ENCODE measurements at regions of chr20 and their contacts with region 1.

Region 1: GRCh38 chr20:39190666-39191570 is 228.8 kb downstream of the DHX35 start:
- DNase-seq: peak; percentile 81
- H3K4me3 Mint-ChIP-seq: no peak overlapping the region
- H3K27ac Mint-ChIP-seq: no peak overlapping the region
- H3K4me1 Mint-ChIP-seq: peaks cover 12% of the 10 kb centered on the region
- H3K27me3 Mint-ChIP-seq: peaks cover 8% of the 10 kb centered on the region
- CTCF ChIP-seq: no peak

Region 2: GRCh38 chr20:39206899-39207564 is 16.1 kb after region 1 on chr20:
- CTCF ChIA-PET with region 1: interaction called, 5 read pairs
- POLR2A ChIA-PET with region 1: interaction called, 16 read pairs
- intact Hi-C with region 1: no loop called
- DNase-seq: peak; percentile 87
- H3K4me3 Mint-ChIP-seq: no peak overlapping the region
- H3K27ac Mint-ChIP-seq: peak overlapping the region; percentile 13
- H3K4me1 Mint-ChIP-seq: peaks cover 18% of the 10 kb centered on the region
- H3K27me3 Mint-ChIP-seq: no peaks in the 10 kb centered on the region
- CTCF ChIP-seq: no peak